Activated B cell treated with CpG ODN at 0.5 μM for 24 hours (primary cell): ENCODE measurements at regions of chr1 and their contacts with region 1.

Region 1: GRCh38 chr1:50929376-50929958 is 30.6 kb downstream of the FAF1 start:
- DNase-seq: no peak
- ATAC-seq: no peak
- H3K4me3 Mint-ChIP-seq: no peak overlapping the region
- H3K27ac Mint-ChIP-seq: no peak overlapping the region
- H3K4me1 Mint-ChIP-seq: peaks cover 34% of the 10 kb centered on the region
- H3K27me3 Mint-ChIP-seq: no peaks in the 10 kb centered on the region
- CTCF ChIP-seq: no peak

Region 2: GRCh38 chr1:51044834-51045233 is 115.4 kb after region 1 on chr1:
- CTCF ChIA-PET with region 1: interaction called, 8 read pairs
- POLR2A ChIA-PET with region 1: no interaction called
- intact Hi-C with region 1: loop called (anchors 1 kb)
- DNase-seq: no peak
- ATAC-seq: no peak
- H3K4me3 Mint-ChIP-seq: no peak overlapping the region
- H3K27ac Mint-ChIP-seq: no peak overlapping the region
- H3K4me1 Mint-ChIP-seq: no peaks in the 10 kb centered on the region
- H3K27me3 Mint-ChIP-seq: peaks cover 12% of the 10 kb centered on the region
- CTCF ChIP-seq: no peak

Region 3: GRCh38 chr1:51421964-51422363 is 492.5 kb after region 1 on chr1:
- CTCF ChIA-PET with region 1: no interaction called
- POLR2A ChIA-PET with region 1: no interaction called
- intact Hi-C with region 1: no loop called
- DNase-seq: no peak
- ATAC-seq: peak; percentile 62
- H3K4me3 Mint-ChIP-seq: no peak overlapping the region
- H3K27ac Mint-ChIP-seq: peak overlapping the region; percentile 50
- H3K4me1 Mint-ChIP-seq: peaks cover 16% of the 10 kb centered on the region
- H3K27me3 Mint-ChIP-seq: no peaks in the 10 kb centered on the region
- CTCF ChIP-seq: no peak